ENCODE measurements at regions of chr12 and their contacts with region 1.

Region 1: GRCh38 chr12:55817346-55818139 is at the starts of genes ORMDL2 and SARNP:
- DNase-seq: peak; percentile 100
- H3K4me3 ChIP-seq: peak within 1 kb of the TSS; percentile 84 to 100 (median 99)
- H3K27ac ChIP-seq: peak within 1 kb of the TSS; percentile 92 to 95
- H3K4me1 ChIP-seq: peaks cover 14 to 27% (median 19%) of the 10 kb centered on the region in 4 experiments
- H3K27me3 ChIP-seq: no peaks in the 10 kb centered on the region

Region 2: GRCh38 chr12:55829967-55830600 is 12.5 kb after region 1 on chr12:
- CTCF ChIA-PET with region 1: interaction called, 12 read pairs
- POLR2A ChIA-PET with region 1: interaction called, 22 read pairs
- DNase-seq: peak in 2 of 3 donors; percentile 69 to 77
- H3K4me3 ChIP-seq: peak overlapping the region; percentile 82 to 100 (median 96)
- H3K27ac ChIP-seq: peak overlapping the region; percentile 95 to 98
- H3K4me1 ChIP-seq: peaks cover 3 to 50% (median 43%) of the 10 kb centered on the region in 4 experiments
- H3K27me3 ChIP-seq: no peaks in the 10 kb centered on the region

Region 3: GRCh38 chr12:55842681-55843429 is 25.3 kb after region 1 on chr12 and contains the start of gene MMP19:
- CTCF ChIA-PET with region 1: no interaction called
- POLR2A ChIA-PET with region 1: no interaction called
- DNase-seq: peak in 2 of 3 donors; percentile 24 to 27
- H3K4me3 ChIP-seq: no peak within 1 kb of the TSS
- H3K27ac ChIP-seq: no peak within 1 kb of the TSS
- H3K4me1 ChIP-seq: peaks cover 0 to 18% (median 8%) of the 10 kb centered on the region in 4 experiments
- H3K27me3 ChIP-seq: peaks cover 0 to 1% (median 0%) of the 10 kb centered on the region in 5 experiments

Region 4: GRCh38 chr12:55940065-55940732 is 122.7 kb after region 1 on chr12:
- CTCF ChIA-PET with region 1: interaction called, 14 read pairs
- POLR2A ChIA-PET with region 1: no interaction called
- DNase-seq: peak; percentile 81 to 87 (median 82)
- H3K4me3 ChIP-seq: peak overlapping the region in 1 of 7 experiments; percentile 6
- H3K27ac ChIP-seq: no peak overlapping the region
- H3K4me1 ChIP-seq: peaks cover 0 to 8% (median 6%) of the 10 kb centered on the region in 4 experiments
- H3K27me3 ChIP-seq: no peaks in the 10 kb centered on the region

Region 5: GRCh38 chr12:55996715-55997534 is 179.4 kb after region 1 on chr12 and contains the start of gene SUOX:
- CTCF ChIA-PET with region 1: no interaction called
- POLR2A ChIA-PET with region 1: no interaction called
- DNase-seq: peak; percentile 72 to 89 (median 86)
- H3K4me3 ChIP-seq: peak within 1 kb of the TSS; percentile 79 to 95 (median 85)
- H3K27ac ChIP-seq: peak within 1 kb of the TSS; percentile 59 to 83
- H3K4me1 ChIP-seq: peaks cover 0 to 20% (median 17%) of the 10 kb centered on the region in 4 experiments
- H3K27me3 ChIP-seq: no peaks in the 10 kb centered on the region

Region 6: DNA sequence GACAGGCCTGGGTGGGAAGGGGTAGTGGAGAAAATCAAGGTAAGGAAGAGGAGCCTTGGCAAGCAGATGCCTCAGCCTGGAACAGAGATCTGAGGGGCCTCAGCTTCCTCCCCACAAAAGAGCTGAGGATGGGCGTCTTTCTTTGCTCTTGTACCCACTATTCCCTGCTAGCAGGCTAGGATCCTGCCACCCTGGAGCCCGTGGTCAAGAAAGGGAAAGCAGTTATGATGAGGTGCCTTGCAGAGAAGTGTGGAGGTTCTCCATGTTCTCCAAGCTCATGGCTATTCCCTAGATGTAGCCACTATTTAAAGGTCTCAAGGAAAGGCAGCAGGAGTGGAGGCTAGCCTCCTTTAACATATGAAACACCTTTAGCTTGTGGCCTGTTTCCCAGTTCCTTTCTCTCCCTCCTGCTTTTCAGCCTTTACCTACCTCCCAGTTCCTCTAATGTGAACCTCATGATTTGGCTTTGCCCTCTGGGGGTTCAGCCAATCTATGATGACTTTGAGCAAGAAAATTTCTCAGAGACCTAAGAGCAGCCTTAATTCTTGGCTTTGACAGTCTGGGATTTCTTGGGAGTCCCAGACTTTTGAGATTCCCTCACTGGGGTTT is 204.4 kb after region 1 on chr12:
- CTCF ChIA-PET with region 1: no interaction called
- POLR2A ChIA-PET with region 1: no interaction called
- DNase-seq: no peak
- H3K4me3 ChIP-seq: peak overlapping the region; percentile 5 to 84 (median 68)
- H3K27ac ChIP-seq: peak overlapping the region in 1 of 2 experiments; percentile 84
- H3K4me1 ChIP-seq: peaks cover 13 to 31% (median 29%) of the 10 kb centered on the region in 4 experiments
- H3K27me3 ChIP-seq: no peaks in the 10 kb centered on the region

Measured in common myeloid progenitor, CD34-positive (primary cell).